IMR-90 (cell line): ENCODE measurements at regions of chr17 and their contacts with region 1.

Region 1: GRCh38 chr17:74864866-74865395 is 5.2 kb upstream of the GRIN2C start:
- DNase-seq: peak; percentile 57
- ATAC-seq: peak; percentile 89
- H3K4me3 ChIP-seq: no peak overlapping the region
- H3K27ac ChIP-seq: no peak overlapping the region
- H3K4me1 ChIP-seq: no peaks in the 10 kb centered on the region; the same call in 1 of the 2 replicates
- H3K27me3 ChIP-seq: peaks cover 24% of the 10 kb centered on the region
- CTCF ChIP-seq: peak; percentile 90
- POLR2A ChIP-seq: no peak
- RAD21 ChIP-seq: peak; percentile 80

Region 2: DNA sequence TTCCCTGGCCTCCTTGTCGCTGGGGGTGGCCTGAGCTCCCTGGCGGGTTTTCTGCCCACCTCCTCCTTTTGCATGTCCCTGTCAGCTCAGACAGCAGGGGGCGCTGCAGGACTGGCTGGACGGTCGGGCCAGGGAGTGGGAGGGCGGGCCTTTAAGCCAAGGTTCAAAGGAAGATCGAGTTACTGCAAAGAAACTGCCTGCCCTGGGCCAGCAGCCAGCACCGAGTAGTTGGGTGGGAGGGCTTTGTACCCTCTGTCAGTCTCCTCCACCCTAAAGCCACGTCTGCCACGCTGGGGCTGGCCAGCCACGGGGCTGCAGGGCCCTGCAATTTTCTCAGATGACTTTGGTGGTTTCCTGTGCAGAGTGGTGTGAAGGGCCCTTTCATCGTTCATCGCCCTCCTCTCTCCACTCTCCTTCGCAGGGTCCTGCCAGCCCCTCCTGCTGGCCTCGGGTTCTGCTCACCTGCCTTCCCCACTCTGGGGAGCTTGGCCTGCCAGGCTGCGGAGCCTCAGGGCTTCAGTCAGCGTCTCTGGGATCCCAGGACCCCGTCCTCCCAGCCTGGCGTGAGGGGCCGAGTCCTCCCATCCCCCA is 485.3 kb before region 1 on chr17:
- CTCF ChIA-PET with region 1: no interaction called
- POLR2A ChIA-PET with region 1: no interaction called
- dilution Hi-C with region 1: no loop called
- in situ Hi-C with region 1: no loop called
- intact Hi-C with region 1: loop called (anchors 10 kb)
- DNase-seq: peak; percentile 47
- ATAC-seq: peak; percentile 88
- H3K4me3 ChIP-seq: no peak overlapping the region
- H3K27ac ChIP-seq: no peak overlapping the region
- H3K4me1 ChIP-seq: no peaks in the 10 kb centered on the region
- H3K27me3 ChIP-seq: no peaks in the 10 kb centered on the region; the same call in 1 of the 2 replicates
- CTCF ChIP-seq: peak; percentile 72
- POLR2A ChIP-seq: no peak
- RAD21 ChIP-seq: peak; percentile 76

Region 3: GRCh38 chr17:74790161-74791054 is 74.5 kb before region 1 on chr17:
- CTCF ChIA-PET with region 1: interaction called, 10 read pairs
- POLR2A ChIA-PET with region 1: interaction called, 4 read pairs
- dilution Hi-C with region 1: no loop called
- in situ Hi-C with region 1: loop called (anchors 5 kb)
- intact Hi-C with region 1: loop called (anchors 1 kb)
- DNase-seq: no peak
- ATAC-seq: no peak
- H3K4me3 ChIP-seq: no peak overlapping the region
- H3K27ac ChIP-seq: no peak overlapping the region
- H3K4me1 ChIP-seq: no peaks in the 10 kb centered on the region
- H3K27me3 ChIP-seq: no peaks in the 10 kb centered on the region
- CTCF ChIP-seq: no peak
- POLR2A ChIP-seq: no peak
- RAD21 ChIP-seq: no peak

Region 4: DNA sequence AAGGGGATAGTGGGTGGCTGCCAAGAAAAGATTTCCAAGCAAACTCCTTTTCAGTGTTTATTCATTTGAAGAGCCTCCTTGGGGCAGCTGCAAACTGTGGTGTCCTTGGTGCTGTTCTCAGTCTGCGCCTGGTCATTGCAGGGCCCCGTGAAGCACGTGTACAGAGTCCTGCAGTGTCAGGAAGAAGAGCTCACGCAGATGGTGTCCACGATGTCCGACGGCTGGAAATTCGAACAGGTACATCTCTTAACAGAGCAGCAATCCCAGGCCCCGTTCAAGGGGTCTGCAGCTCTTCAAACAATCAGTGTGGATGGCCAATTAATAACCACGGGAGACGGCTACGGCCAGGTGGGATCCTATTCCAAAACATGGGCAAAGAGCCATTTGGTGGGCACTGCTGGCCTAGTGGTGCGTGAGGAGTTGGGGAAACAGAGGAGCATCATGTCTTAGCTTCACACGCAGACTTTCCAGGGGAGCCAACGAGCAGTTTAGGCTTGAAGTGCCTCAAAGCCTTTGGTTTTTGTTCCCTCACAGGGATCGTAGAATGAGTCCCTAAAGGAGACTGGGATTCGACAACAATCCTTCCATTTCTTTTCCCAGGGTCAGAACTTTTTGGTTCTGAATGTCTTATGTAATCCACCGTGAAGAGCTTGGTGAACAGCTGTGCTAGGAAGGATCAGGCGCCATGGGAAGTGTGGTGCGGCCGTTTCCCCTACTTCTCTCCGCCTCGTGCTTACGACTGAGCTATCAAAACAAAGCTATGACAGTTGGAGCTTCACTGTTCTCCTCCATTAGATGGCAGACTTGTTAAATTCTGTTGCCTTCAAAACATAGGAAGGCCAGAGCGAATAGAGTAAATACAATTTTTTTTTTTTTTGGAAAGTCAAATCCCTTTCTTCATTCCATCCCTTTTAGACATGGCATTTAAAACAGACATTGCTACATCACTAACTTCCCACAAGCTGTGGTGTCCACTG is 194.7 kb after region 1 on chr17:
- CTCF ChIA-PET with region 1: no interaction called
- POLR2A ChIA-PET with region 1: no interaction called
- dilution Hi-C with region 1: no loop called
- in situ Hi-C with region 1: no loop called
- intact Hi-C with region 1: no loop called
- DNase-seq: peak; percentile 81
- ATAC-seq: peak; percentile 98
- H3K4me3 ChIP-seq: no peak overlapping the region
- H3K27ac ChIP-seq: no peak overlapping the region
- H3K4me1 ChIP-seq: peaks cover 6% of the 10 kb centered on the region; the same call in 1 of the 2 replicates
- H3K27me3 ChIP-seq: no peaks in the 10 kb centered on the region
- CTCF ChIP-seq: peak; percentile 77
- POLR2A ChIP-seq: no peak
- RAD21 ChIP-seq: peak; percentile 69

Region 5: GRCh38 chr17:76075364-76076145 is 1210.6 kb after region 1 on chr17:
- CTCF ChIA-PET with region 1: no interaction called
- POLR2A ChIA-PET with region 1: no interaction called
- dilution Hi-C with region 1: no loop called
- in situ Hi-C with region 1: no loop called
- intact Hi-C with region 1: no loop called
- DNase-seq: no peak
- ATAC-seq: no peak
- H3K4me3 ChIP-seq: no peak overlapping the region
- H3K27ac ChIP-seq: no peak overlapping the region
- H3K4me1 ChIP-seq: peaks cover 3% of the 10 kb centered on the region; the same call in 1 of the 2 replicates
- H3K27me3 ChIP-seq: peaks cover 66% of the 10 kb centered on the region
- CTCF ChIP-seq: no peak
- POLR2A ChIP-seq: no peak
- RAD21 ChIP-seq: no peak